ENCODE measurements at regions of chr9 and their contacts with region 1.

Region 1: GRCh38 chr9:21688108-21689102 is 114.0 kb upstream of the MTAP start:
- DNase-seq: peak; percentile 38
- H3K4me3 Mint-ChIP-seq: peak overlapping the region; percentile 65
- H3K27ac Mint-ChIP-seq: peak overlapping the region; percentile 90
- H3K4me1 Mint-ChIP-seq: peaks cover 63% of the 10 kb centered on the region
- H3K27me3 Mint-ChIP-seq: no peaks in the 10 kb centered on the region
- CTCF ChIP-seq: no peak

Region 2: GRCh38 chr9:21465859-21466518 is 222.4 kb before region 1 on chr9:
- CTCF ChIA-PET with region 1: no interaction called
- intact Hi-C with region 1: loop called (anchors 10 kb)
- DNase-seq: peak; percentile 15
- H3K4me3 Mint-ChIP-seq: no peak overlapping the region
- H3K27ac Mint-ChIP-seq: no peak overlapping the region
- H3K4me1 Mint-ChIP-seq: no peaks in the 10 kb centered on the region
- H3K27me3 Mint-ChIP-seq: no peaks in the 10 kb centered on the region
- CTCF ChIP-seq: peak; percentile 39

Region 3: DNA sequence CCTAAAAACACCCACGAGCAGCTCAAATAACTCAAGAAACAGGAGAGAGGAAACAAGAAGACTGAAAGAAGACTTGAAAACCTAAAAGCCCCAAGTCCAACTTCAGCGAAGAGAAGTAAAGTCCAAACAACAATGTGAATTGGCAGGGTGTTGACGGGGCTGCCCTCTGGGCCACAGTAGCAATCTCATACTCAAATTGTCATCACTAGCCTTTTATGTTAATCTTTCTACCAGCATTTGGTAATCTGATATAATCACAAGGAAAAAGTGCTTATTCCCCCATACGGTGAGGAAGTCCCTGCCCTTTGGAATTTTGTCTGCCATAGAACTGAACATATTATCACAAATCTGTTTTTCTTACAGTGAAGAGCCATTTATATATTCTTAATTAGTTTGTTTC is 154.8 kb before region 1 on chr9:
- CTCF ChIA-PET with region 1: no interaction called
- intact Hi-C with region 1: no loop called
- DNase-seq: no peak
- H3K4me3 Mint-ChIP-seq: no peak overlapping the region
- H3K27ac Mint-ChIP-seq: no peak overlapping the region
- H3K4me1 Mint-ChIP-seq: peaks cover 20% of the 10 kb centered on the region
- H3K27me3 Mint-ChIP-seq: no peaks in the 10 kb centered on the region
- CTCF ChIP-seq: no peak

Region 4: GRCh38 chr9:21777701-21778100 is 89.3 kb after region 1 on chr9:
- CTCF ChIA-PET with region 1: no interaction called
- intact Hi-C with region 1: loop called (anchors 1 kb)
- DNase-seq: peak; percentile 52
- H3K4me3 Mint-ChIP-seq: no peak overlapping the region
- H3K27ac Mint-ChIP-seq: no peak overlapping the region
- H3K4me1 Mint-ChIP-seq: no peaks in the 10 kb centered on the region
- H3K27me3 Mint-ChIP-seq: no peaks in the 10 kb centered on the region
- CTCF ChIP-seq: no peak

Region 5: GRCh38 chr9:21831961-21832509 is 143.6 kb after region 1 on chr9:
- CTCF ChIA-PET with region 1: no interaction called
- intact Hi-C with region 1: no loop called
- DNase-seq: peak; percentile 39
- H3K4me3 Mint-ChIP-seq: peak overlapping the region; percentile 24
- H3K27ac Mint-ChIP-seq: peak overlapping the region; percentile 75
- H3K4me1 Mint-ChIP-seq: peaks cover 74% of the 10 kb centered on the region
- H3K27me3 Mint-ChIP-seq: no peaks in the 10 kb centered on the region
- CTCF ChIP-seq: no peak